Calu3 (cell line): ENCODE measurements at regions of chr12 and their contacts with region 1.

Region 1: DNA sequence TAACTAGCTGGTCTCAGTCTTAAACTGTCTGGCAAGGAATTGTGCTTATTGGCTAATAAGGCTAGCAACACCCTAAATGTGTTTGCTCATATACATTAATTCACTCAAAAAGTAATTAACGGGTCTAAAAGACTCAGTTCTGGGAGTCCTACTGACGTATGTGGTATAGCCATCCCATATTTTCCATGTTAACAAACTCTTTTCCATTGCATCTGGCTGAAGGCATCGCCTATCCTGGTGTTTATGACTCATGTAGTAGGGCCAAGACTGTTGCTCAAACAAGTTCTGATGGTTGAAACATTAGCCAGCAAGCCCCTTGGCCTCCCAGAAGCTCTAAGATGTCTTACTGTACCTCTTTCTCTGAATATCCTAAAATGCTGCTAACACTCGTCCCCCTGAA is 98.5 kb downstream of the PHLDA1 start:
- DNase-seq: peak; percentile 69
- H3K4me3 Mint-ChIP-seq: peak overlapping the region; percentile 4
- H3K27ac Mint-ChIP-seq: peak overlapping the region; percentile 43
- H3K4me1 Mint-ChIP-seq: peaks cover 34% of the 10 kb centered on the region
- H3K27me3 Mint-ChIP-seq: no peaks in the 10 kb centered on the region
- CTCF ChIP-seq: no peak

Region 2: DNA sequence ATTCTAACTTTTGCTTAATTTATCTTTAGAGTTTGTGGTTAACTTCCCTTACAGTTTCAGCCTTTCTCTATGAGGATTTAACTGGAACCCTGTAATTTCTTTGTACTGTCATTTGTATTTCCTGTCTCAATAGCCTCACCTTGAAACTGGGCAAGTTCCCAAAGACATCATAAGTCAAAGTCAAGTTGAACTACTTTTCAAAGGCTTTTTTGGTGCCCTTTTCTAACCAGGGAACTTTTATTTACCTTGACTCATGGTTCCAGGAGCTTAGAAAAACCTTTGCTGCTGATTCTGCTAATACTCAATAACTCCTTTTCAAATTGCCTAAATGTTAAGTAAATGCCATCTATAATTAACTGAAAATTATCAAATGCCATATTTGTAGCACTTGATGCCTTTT is 220.8 kb before region 1 on chr12:
- CTCF ChIA-PET with region 1: no interaction called
- intact Hi-C with region 1: loop called (anchors 5 kb)
- DNase-seq: peak; percentile 51
- H3K4me3 Mint-ChIP-seq: no peak overlapping the region
- H3K27ac Mint-ChIP-seq: peak overlapping the region; percentile 91
- H3K4me1 Mint-ChIP-seq: peaks cover 73% of the 10 kb centered on the region
- H3K27me3 Mint-ChIP-seq: no peaks in the 10 kb centered on the region
- CTCF ChIP-seq: no peak

Region 3: DNA sequence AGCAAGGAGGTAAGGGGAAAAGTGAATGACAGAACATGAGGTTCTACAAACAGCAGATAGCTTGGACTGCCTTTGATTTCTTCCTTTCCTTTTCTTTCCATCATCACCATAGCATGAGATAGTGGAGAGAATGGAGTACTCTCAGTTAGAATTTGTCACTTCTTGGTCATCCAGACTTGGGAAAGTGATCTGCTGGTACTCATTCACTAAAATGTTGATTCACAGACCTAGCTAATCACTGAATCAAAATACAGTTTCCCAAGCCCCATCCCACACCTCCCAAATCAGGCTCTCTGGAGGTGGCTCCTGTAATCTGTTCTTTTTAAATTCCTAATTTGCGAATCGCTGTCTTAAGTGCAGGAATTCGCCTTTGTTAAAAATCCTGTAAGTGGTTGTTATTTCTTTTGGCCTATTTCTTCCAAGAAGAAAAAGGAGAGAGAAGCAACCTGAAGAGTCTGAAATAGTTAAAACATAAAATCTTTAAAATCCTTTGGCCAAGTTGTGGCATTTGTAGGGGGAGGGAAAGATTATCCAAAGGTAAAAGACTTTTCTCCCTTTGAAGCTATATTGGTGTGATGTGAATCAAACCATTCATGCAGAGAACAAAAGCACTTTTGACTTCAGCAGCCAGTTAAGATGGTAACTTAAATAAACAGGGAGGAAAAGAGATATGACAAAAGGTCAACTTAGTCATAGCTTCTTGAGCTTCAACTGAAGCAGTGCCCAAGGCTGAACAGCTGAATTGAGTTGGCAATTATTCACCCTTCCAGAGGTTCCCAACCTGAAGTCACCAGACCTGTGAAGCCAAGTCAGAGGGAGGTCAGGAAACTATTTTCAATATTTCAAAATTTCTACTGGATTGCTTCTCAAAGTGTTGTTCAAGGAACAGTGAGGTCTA is 166.6 kb before region 1 on chr12:
- CTCF ChIA-PET with region 1: interaction called, 5 read pairs
- intact Hi-C with region 1: loop called (anchors 1 kb)
- DNase-seq: peak; percentile 63
- H3K4me3 Mint-ChIP-seq: no peak overlapping the region
- H3K27ac Mint-ChIP-seq: peak overlapping the region; percentile 73
- H3K4me1 Mint-ChIP-seq: peaks cover 60% of the 10 kb centered on the region
- H3K27me3 Mint-ChIP-seq: no peaks in the 10 kb centered on the region
- CTCF ChIP-seq: no peak

Region 4: DNA sequence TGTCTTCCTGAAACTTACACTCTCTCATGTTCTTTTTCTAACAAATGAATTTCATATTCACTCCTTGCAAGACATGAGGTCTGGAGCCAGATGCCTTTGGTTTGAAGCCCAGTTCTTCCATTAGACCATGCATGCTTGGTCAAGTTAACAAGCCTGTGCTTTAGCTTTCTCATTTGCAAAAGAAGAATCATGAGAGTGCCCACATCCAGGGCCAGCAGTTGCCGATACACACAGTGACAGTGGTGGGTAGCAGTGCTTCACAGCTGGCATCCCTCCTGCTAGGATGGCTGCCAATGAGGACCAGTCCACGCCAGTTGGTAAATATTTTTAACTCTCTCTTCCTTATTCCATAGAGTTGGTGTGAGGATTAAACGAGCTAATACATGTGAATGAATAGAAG is 64.6 kb before region 1 on chr12:
- CTCF ChIA-PET with region 1: no interaction called
- intact Hi-C with region 1: no loop called
- DNase-seq: no peak
- H3K4me3 Mint-ChIP-seq: no peak overlapping the region
- H3K27ac Mint-ChIP-seq: no peak overlapping the region
- H3K4me1 Mint-ChIP-seq: peaks cover 53% of the 10 kb centered on the region
- H3K27me3 Mint-ChIP-seq: no peaks in the 10 kb centered on the region
- CTCF ChIP-seq: no peak

Region 5: GRCh38 chr12:75892731-75893408 is 40.2 kb before region 1 on chr12:
- CTCF ChIA-PET with region 1: no interaction called
- intact Hi-C with region 1: loop called (anchors 5 kb)
- DNase-seq: peak; percentile 30
- H3K4me3 Mint-ChIP-seq: no peak overlapping the region
- H3K27ac Mint-ChIP-seq: peak overlapping the region; percentile 7
- H3K4me1 Mint-ChIP-seq: peaks cover 70% of the 10 kb centered on the region
- H3K27me3 Mint-ChIP-seq: no peaks in the 10 kb centered on the region
- CTCF ChIP-seq: no peak

Region 6: GRCh38 chr12:75944097-75944904 is 11.2 kb after region 1 on chr12:
- CTCF ChIA-PET with region 1: interaction called, 13 read pairs
- intact Hi-C with region 1: no loop called
- DNase-seq: peak; percentile 44
- H3K4me3 Mint-ChIP-seq: peak overlapping the region; percentile 57
- H3K27ac Mint-ChIP-seq: peak overlapping the region; percentile 87
- H3K4me1 Mint-ChIP-seq: peaks cover 34% of the 10 kb centered on the region
- H3K27me3 Mint-ChIP-seq: no peaks in the 10 kb centered on the region
- CTCF ChIP-seq: no peak